ENCODE measurements at regions of chr11 and their contacts with region 1.

Region 1: DNA sequence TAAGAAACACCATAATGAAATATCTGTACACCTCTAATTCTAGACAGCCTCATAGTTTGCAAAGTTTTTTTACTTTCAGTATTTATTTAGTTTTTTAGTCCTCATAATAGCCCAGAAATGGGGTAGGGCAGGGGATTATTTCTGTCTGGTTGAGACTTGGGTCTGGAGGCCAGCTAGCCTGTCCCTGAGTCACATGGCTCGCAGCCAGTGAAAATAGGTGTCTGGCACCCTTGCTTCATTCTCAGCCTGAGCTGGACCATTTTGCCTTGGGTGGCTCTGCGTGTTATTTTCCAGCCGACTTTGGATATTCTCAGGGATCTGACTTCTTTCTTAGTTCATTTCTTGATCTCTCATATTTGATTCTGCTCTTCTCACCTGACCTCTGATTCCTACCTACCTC is 123.9 kb upstream of the NARS2 start:
- DNase-seq: no peak
- ATAC-seq: no peak
- H3K4me3 Mint-ChIP-seq: no peak overlapping the region
- H3K27ac Mint-ChIP-seq: no peak overlapping the region
- H3K4me1 Mint-ChIP-seq: no peaks in the 10 kb centered on the region
- H3K27me3 Mint-ChIP-seq: peaks cover 20% of the 10 kb centered on the region

Region 2: DNA sequence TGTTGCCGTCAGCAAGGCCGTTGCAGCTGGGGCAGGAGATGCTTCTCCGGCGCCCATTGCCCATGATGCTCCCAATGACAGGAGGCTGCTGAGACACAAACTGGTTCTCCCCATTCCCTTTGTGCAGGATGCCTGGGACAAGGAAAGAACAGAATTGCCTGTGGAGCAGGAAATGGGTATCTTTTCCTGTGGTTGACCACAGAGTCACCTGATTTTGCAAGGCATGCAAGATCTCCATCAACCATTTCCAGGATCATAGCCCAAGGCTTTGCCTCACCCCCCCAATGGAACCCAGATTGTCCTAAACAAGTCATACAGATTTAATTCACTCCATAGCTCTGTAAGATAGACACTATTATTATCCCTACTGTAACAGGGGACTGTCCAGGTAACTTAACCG is 24.2 kb after region 1 on chr11:
- CTCF ChIA-PET with region 1: no interaction called
- POLR2A ChIA-PET with region 1: no interaction called
- intact Hi-C with region 1: loop called in 1 of 2 experiments (anchors 2 kb)
- DNase-seq: no peak
- ATAC-seq: no peak
- H3K4me3 Mint-ChIP-seq: no peak overlapping the region
- H3K27ac Mint-ChIP-seq: no peak overlapping the region
- H3K4me1 Mint-ChIP-seq: peaks cover 2% of the 10 kb centered on the region
- H3K27me3 Mint-ChIP-seq: peaks cover 9% of the 10 kb centered on the region

Region 3: GRCh38 chr11:79076526-79077115 is 378.0 kb after region 1 on chr11:
- CTCF ChIA-PET with region 1: no interaction called
- POLR2A ChIA-PET with region 1: no interaction called
- intact Hi-C with region 1: no loop called
- DNase-seq: peak; percentile 41
- ATAC-seq: no peak
- H3K4me3 Mint-ChIP-seq: no peak overlapping the region
- H3K27ac Mint-ChIP-seq: no peak overlapping the region
- H3K4me1 Mint-ChIP-seq: no peaks in the 10 kb centered on the region
- H3K27me3 Mint-ChIP-seq: peaks cover 2% of the 10 kb centered on the region

Measured in activated CD4-positive, alpha-beta T cell treated with anti-CD3 and anti-CD28 coated beads for 36 hours (primary cell).